ENCODE measurements at regions of chr2 and their contacts with region 1.

Region 1: DNA sequence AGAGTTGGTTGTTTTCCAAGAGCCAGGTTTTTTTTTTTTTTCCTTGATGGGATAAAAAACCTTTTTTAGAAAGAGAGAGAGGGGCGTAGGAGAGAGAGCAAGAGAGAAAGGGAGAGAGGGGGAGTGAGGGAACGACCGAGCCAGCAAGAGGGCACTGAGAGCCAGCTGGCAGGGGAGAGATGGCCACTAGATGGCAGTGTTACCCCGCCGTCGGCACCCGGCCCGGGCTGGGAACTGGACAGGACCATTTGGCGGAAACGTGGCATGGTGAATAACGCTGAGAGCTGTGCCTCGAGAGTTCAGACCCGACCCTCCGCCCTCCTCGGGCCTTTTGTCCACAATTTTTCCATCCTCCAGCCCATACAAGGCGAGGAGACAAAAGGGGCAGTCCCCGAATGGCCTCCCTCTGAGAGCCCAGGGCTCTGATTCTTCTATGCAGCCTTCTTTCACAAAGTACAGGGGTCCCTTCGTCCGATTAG is 286.7 kb upstream of the VRK2 start:
- DNase-seq: peak; percentile 93
- ATAC-seq: peak; percentile 96
- H3K4me3 ChIP-seq: peak overlapping the region; percentile 45; the same call in 1 of the 2 replicates
- H3K27ac ChIP-seq: peak overlapping the region; percentile 54
- H3K4me1 ChIP-seq: peaks cover 23% of the 10 kb centered on the region
- H3K27me3 ChIP-seq: no peaks in the 10 kb centered on the region
- CTCF ChIP-seq: peak; percentile 95

Region 2: GRCh38 chr2:57869758-57870344 is 110.0 kb after region 1 on chr2:
- CTCF ChIA-PET with region 1: no interaction called
- POLR2A ChIA-PET with region 1: no interaction called
- intact Hi-C with region 1: loop called (anchors 1 kb)
- DNase-seq: peak; percentile 77
- ATAC-seq: no peak
- H3K4me3 ChIP-seq: no peak overlapping the region
- H3K27ac ChIP-seq: peak overlapping the region; percentile 97
- H3K4me1 ChIP-seq: peaks cover 68% of the 10 kb centered on the region
- H3K27me3 ChIP-seq: no peaks in the 10 kb centered on the region
- CTCF ChIP-seq: no peak

Region 3: GRCh38 chr2:57881998-57882884 is 122.4 kb after region 1 on chr2:
- CTCF ChIA-PET with region 1: interaction called, 3 read pairs
- POLR2A ChIA-PET with region 1: no interaction called
- intact Hi-C with region 1: loop called (anchors 1 kb)
- DNase-seq: peak; percentile 95
- ATAC-seq: peak; percentile 76
- H3K4me3 ChIP-seq: peak overlapping the region; percentile 49
- H3K27ac ChIP-seq: peak overlapping the region; percentile 97
- H3K4me1 ChIP-seq: peaks cover 84% of the 10 kb centered on the region
- H3K27me3 ChIP-seq: no peaks in the 10 kb centered on the region
- CTCF ChIP-seq: no peak

Region 4: GRCh38 chr2:57920342-57920939 is 160.6 kb after region 1 on chr2:
- CTCF ChIA-PET with region 1: no interaction called
- POLR2A ChIA-PET with region 1: no interaction called
- intact Hi-C with region 1: no loop called
- DNase-seq: no peak
- ATAC-seq: no peak
- H3K4me3 ChIP-seq: no peak overlapping the region
- H3K27ac ChIP-seq: no peak overlapping the region
- H3K4me1 ChIP-seq: no peaks in the 10 kb centered on the region
- H3K27me3 ChIP-seq: no peaks in the 10 kb centered on the region
- CTCF ChIP-seq: no peak

Region 5: DNA sequence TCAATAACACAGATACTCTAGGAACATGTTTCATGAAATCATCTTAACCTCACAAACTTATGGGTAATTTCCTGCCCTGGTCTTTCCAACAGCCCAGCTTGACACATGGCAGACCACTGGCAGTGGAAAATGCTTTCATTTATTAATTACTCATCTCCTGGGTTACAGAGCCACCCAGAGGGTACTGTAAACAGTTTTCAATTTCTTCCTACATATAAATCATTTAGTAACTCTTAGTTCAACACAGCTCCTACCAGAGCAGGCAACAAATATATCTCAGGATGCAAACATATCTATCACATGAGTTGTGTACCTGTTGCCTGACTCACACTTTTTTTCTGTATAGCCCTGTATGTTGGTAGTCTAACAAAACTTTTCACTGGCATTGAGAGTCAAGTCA is 187.5 kb after region 1 on chr2:
- CTCF ChIA-PET with region 1: no interaction called
- POLR2A ChIA-PET with region 1: interaction called, 4 read pairs
- intact Hi-C with region 1: loop called (anchors 1 kb)
- DNase-seq: peak; percentile 58
- ATAC-seq: peak; percentile 93
- H3K4me3 ChIP-seq: no peak overlapping the region
- H3K27ac ChIP-seq: no peak overlapping the region
- H3K4me1 ChIP-seq: 0 out of 2 replicates have a peak, but pooled peaks cover 12% of the 10 kb centered on the region
- H3K27me3 ChIP-seq: no peaks in the 10 kb centered on the region
- CTCF ChIP-seq: peak; percentile 45

Region 6: GRCh38 chr2:58131191-58132011 is 371.5 kb after region 1 on chr2:
- CTCF ChIA-PET with region 1: no interaction called
- POLR2A ChIA-PET with region 1: no interaction called
- intact Hi-C with region 1: loop called (anchors 5 kb)
- DNase-seq: no peak
- ATAC-seq: peak; percentile 43; the same call in 1 of the 2 replicates
- H3K4me3 ChIP-seq: no peak overlapping the region
- H3K27ac ChIP-seq: no peak overlapping the region
- H3K4me1 ChIP-seq: 0 out of 2 replicates have a peak, but pooled peaks cover 7% of the 10 kb centered on the region
- H3K27me3 ChIP-seq: no peaks in the 10 kb centered on the region
- CTCF ChIP-seq: peak; percentile 49